Activated CD4-positive, alpha-beta T cell treated with anti-CD3 and anti-CD28 coated beads, Interleukin-2, amount 10 ng/mL, durations not matched to agents 24 days and 14 days (primary cell): ENCODE measurements at regions of chr3 and their contacts with region 1.

Region 1: DNA sequence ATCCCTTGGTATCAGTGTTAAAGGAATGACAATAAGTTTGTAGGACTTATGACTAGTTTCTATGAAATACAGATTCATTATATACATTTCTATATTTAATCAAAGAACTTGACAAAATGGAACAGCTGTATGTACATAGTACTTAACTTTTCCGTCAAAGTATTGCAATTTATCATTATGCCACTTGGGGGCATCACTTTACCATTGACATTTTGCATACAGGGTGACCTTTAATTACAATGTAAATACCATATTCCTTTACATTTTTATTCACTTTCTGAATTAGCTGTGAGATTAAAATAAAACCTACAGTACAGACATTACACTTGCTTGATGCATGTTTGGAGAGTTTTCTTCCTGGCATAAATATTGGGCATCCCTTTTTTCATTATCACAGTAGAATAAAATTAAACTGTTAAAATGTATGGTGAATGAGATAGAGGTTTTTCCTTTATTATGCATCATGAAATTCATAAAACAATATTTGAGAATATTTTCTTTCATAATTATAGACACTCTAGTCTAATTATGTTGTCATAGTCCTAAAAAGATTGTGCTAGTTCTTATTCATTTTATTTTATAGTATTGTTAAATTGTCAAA is 6.9 kb downstream of the NEK11 start:
- DNase-seq: peak; percentile 86
- H3K4me3 Mint-ChIP-seq: no peak overlapping the region
- H3K27ac Mint-ChIP-seq: no peak overlapping the region
- H3K4me1 Mint-ChIP-seq: no peaks in the 10 kb centered on the region
- H3K27me3 Mint-ChIP-seq: peaks cover 11% of the 10 kb centered on the region

Region 2: GRCh38 chr3:131053043-131053859 is 19.7 kb after region 1 on chr3:
- intact Hi-C with region 1: no loop called
- DNase-seq: no peak
- H3K4me3 Mint-ChIP-seq: no peak overlapping the region
- H3K27ac Mint-ChIP-seq: no peak overlapping the region
- H3K4me1 Mint-ChIP-seq: no peaks in the 10 kb centered on the region
- H3K27me3 Mint-ChIP-seq: peaks cover 1% of the 10 kb centered on the region

Region 3: GRCh38 chr3:131167867-131168266 is 134.3 kb after region 1 on chr3:
- intact Hi-C with region 1: loop called (anchors 10 kb)
- DNase-seq: no peak
- H3K4me3 Mint-ChIP-seq: no peak overlapping the region
- H3K27ac Mint-ChIP-seq: no peak overlapping the region
- H3K4me1 Mint-ChIP-seq: no peaks in the 10 kb centered on the region
- H3K27me3 Mint-ChIP-seq: peaks cover 6% of the 10 kb centered on the region

Region 4: DNA sequence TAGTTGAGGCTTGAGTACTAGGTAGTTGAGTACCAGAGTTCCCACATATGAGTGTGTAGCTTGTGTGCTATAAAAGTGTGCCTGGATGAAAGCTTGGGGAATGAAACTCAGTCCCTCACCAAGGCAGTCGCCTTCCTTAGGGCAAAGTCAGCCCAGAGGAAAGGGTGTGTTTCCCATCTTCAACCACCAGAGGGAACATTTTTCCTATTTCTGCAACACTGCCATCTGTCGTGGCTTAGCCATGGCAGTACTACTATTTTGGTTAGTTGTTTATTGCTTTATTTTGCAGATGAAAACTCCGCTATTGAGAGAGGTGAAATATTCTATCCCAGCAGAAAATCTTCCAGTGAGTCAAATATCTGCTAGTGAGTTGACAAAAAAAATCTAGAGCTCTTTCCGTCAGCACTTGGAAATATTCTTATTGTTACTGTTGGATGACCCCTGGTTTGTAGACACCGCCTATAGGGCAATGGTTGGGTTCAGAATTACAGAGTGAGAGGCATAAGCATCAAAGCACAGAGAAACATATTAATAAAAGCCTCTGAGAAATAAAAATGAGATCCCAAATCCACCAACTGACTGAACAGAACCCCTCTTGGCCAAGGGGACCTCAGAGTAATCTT is 761.3 kb after region 1 on chr3:
- intact Hi-C with region 1: loop called (anchors 5 kb)
- DNase-seq: peak; percentile 75
- H3K4me3 Mint-ChIP-seq: no peak overlapping the region
- H3K27ac Mint-ChIP-seq: no peak overlapping the region
- H3K4me1 Mint-ChIP-seq: peaks cover 5% of the 10 kb centered on the region
- H3K27me3 Mint-ChIP-seq: peaks cover 10% of the 10 kb centered on the region

Region 5: DNA sequence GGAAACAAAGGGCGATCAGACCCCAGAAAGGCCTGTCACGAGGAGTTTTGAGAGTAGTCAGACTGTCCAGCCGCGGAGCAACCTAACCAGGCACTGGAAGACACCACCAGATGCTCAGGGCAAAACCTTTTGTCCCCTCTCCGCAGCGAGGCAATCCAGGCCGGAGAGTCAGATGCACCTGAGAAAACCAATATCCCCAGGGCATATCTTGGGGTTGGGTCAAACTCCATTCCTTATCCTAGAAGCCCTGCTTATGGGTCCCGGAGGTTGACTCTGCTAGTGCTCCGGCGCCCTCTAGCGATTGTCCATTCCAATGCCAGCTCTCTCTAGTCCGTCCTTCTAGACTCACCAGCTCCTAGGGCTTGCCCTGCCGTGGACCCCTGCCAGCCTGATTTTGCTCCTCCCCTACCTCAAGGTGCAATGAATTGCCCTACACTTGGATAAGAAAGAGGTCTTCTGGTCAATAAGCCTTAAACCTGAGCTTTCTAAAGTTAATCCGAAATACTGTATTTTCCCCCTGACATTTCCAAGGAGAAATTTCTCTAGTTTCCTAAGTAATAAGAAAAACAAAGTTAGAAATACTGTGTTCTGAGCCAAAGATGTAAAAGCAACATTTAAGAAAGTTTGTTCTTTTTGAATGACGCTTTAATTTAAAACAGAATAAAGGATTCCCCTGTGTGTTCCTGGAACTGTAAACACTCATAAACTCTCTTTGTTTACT is 995.8 kb after region 1 on chr3:
- intact Hi-C with region 1: loop called (anchors 1 kb)
- DNase-seq: peak; percentile 87
- H3K4me3 Mint-ChIP-seq: no peak overlapping the region
- H3K27ac Mint-ChIP-seq: no peak overlapping the region
- H3K4me1 Mint-ChIP-seq: peaks cover 3% of the 10 kb centered on the region
- H3K27me3 Mint-ChIP-seq: peaks cover 37% of the 10 kb centered on the region

Region 6: DNA sequence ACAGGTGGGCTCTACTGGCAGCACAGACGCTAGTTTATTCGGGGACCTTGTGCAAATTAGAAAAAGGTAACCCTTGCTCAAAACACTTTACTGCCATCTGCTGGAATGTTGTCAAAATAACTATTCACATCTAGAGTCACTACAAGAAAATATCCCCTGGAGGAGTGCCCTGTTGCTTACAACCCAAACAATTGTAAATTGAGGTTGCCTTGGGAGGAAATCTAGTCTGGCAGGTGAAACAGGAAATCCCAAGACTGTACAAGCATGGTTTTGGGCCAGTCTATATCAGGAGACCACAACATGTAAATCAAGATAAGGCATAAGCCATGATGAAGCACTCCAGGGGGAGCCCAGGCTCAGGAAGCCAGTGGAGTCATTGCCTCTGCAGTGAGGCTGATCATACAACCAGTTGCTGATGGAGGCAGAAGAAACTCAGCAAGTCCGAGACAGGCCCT is 1146.8 kb after region 1 on chr3:
- intact Hi-C with region 1: loop called (anchors 2 kb)
- DNase-seq: peak; percentile 62
- H3K4me3 Mint-ChIP-seq: no peak overlapping the region
- H3K27ac Mint-ChIP-seq: no peak overlapping the region
- H3K4me1 Mint-ChIP-seq: no peaks in the 10 kb centered on the region
- H3K27me3 Mint-ChIP-seq: peaks cover 3% of the 10 kb centered on the region